Activated CD8-positive, alpha-beta memory T cell treated with anti-CD3 and anti-CD28 coated beads, Interleukin-2, amount 10 ng/mL, durations not matched to agents 7 days and 5 days (primary cell): ENCODE measurements at regions of chr2 and their contacts with region 1.

Region 1: DNA sequence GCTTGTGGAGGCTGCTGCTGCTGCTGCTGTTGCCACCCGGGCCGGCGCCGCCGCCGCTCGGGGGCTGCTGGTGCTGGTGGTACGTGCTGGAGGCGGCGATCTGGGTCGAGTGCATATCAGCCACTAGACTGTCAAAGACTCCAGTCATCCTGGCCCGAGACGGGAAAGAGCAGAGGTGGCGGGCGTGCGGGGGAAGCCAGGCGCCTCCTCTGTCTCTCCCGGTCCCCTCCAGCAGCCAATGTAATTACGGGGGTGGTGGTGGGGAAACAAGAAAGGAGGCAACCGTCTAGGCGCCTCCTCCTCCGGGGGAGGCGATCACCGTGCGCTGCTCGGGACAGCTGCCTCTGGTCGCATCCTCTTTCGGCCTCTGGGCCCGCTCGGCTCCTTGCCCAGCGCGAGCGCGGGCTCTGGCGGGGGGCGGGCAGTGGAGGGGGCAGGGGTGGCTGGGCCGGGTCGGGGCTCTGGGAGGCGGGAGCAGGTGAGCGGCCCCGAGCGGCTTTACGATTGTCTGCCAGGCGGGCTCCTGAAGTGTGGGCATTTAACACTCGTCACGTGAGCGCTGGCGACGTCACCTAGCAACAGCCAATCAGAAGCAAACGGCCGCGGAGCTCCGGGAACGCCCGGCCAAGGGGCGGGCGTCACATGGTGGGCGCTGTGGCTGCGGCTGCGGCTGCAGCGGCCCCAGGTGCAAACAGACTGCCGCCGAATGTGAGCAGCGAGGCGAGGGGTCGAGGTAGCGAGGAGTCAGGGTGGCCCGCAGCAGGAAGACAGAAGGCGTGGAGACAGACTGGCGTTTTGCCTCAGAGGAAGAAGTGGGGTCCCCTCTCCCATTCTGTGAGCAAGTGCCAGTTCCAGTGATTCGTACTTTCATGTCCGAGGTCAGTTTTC is at the start of gene DLX2:
- DNase-seq: peak; percentile 84
- ATAC-seq: peak; percentile 64
- H3K4me3 Mint-ChIP-seq: peak within 1 kb of the TSS; percentile 67
- H3K27ac Mint-ChIP-seq: peak within 1 kb of the TSS; percentile 63
- H3K4me1 Mint-ChIP-seq: peaks cover 54% of the 10 kb centered on the region
- H3K27me3 Mint-ChIP-seq: peaks cover 83% of the 10 kb centered on the region
- total RNA-seq, gene DLX2: 0.12 TPM in 1 of 2 experiments, not detected in the other

Region 2: GRCh38 chr2:171703574-171704347 is 398.9 kb before region 1 on chr2:
- CTCF ChIA-PET with region 1: interaction called, 142 read pairs
- DNase-seq: no peak
- ATAC-seq: no peak
- H3K4me3 Mint-ChIP-seq: no peak overlapping the region
- H3K27ac Mint-ChIP-seq: no peak overlapping the region
- H3K4me1 Mint-ChIP-seq: peaks cover 2% of the 10 kb centered on the region
- H3K27me3 Mint-ChIP-seq: no peaks in the 10 kb centered on the region

Region 3: GRCh38 chr2:172084734-172085459 is 17.7 kb before region 1 on chr2:
- CTCF ChIA-PET with region 1: interaction called, 43 read pairs
- DNase-seq: peak; percentile 80
- ATAC-seq: peak; percentile 84
- H3K4me3 Mint-ChIP-seq: peak overlapping the region; percentile 65
- H3K27ac Mint-ChIP-seq: peak overlapping the region; percentile 70
- H3K4me1 Mint-ChIP-seq: peaks cover 51% of the 10 kb centered on the region
- H3K27me3 Mint-ChIP-seq: peaks cover 98% of the 10 kb centered on the region

Region 4: DNA sequence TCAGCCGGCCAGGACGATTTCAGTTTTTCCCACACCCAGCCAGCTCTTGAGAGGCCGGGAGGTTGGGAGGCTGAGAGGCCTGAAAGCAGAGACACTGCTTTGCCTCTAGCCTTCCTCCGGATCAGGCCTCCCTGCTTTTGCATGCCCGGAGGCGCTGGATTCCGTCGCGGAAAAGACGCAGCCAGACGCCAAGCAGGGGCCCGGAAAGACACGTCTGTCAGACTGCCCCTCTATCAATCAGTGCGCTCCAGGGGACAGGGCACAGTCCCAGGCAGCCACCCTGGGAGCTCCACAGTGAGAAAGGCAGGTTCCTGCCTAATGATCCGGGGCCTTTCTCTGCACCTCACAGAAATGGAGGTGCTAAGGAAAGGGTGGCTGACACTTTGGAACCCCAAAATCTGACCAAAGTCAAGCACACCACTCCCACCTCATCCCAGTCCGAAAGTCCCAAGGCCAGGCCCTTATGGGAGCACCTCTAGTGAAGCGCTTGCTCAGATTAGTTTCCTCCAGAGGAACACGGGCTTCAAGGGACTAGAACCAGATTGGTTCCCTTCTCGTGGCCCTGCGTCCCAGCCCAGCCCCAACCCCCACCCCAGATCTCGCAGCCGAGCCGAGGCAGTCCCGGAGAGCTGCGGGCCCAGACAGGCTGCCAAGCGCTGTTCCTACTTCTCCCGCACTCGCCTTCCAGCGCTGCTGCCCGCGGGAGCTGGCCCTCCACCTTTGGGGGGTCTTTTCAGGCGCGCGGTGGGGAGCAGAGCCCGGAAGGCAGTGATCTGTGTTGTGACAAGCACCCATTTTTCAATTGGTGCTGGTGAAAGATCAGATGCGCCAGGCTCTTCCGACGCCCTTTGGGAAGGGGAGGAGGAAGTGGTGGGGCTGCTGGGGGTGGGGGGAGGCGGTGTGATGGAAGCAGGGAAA is 12.3 kb before region 1 on chr2:
- CTCF ChIA-PET with region 1: interaction called, 43 read pairs
- DNase-seq: peak; percentile 36
- ATAC-seq: no peak
- H3K4me3 Mint-ChIP-seq: no peak overlapping the region
- H3K27ac Mint-ChIP-seq: no peak overlapping the region
- H3K4me1 Mint-ChIP-seq: peaks cover 34% of the 10 kb centered on the region
- H3K27me3 Mint-ChIP-seq: peaks cover 91% of the 10 kb centered on the region

Region 5: GRCh38 chr2:172389685-172390339 is 287.2 kb after region 1 on chr2:
- CTCF ChIA-PET with region 1: no interaction called
- DNase-seq: no peak
- ATAC-seq: no peak
- H3K4me3 Mint-ChIP-seq: no peak overlapping the region
- H3K27ac Mint-ChIP-seq: no peak overlapping the region
- H3K4me1 Mint-ChIP-seq: no peaks in the 10 kb centered on the region
- H3K27me3 Mint-ChIP-seq: no peaks in the 10 kb centered on the region